Transverse colon (tissue), 4 donors: ENCODE measurements at regions of chr6 and their contacts with region 1.

Region 1: DNA sequence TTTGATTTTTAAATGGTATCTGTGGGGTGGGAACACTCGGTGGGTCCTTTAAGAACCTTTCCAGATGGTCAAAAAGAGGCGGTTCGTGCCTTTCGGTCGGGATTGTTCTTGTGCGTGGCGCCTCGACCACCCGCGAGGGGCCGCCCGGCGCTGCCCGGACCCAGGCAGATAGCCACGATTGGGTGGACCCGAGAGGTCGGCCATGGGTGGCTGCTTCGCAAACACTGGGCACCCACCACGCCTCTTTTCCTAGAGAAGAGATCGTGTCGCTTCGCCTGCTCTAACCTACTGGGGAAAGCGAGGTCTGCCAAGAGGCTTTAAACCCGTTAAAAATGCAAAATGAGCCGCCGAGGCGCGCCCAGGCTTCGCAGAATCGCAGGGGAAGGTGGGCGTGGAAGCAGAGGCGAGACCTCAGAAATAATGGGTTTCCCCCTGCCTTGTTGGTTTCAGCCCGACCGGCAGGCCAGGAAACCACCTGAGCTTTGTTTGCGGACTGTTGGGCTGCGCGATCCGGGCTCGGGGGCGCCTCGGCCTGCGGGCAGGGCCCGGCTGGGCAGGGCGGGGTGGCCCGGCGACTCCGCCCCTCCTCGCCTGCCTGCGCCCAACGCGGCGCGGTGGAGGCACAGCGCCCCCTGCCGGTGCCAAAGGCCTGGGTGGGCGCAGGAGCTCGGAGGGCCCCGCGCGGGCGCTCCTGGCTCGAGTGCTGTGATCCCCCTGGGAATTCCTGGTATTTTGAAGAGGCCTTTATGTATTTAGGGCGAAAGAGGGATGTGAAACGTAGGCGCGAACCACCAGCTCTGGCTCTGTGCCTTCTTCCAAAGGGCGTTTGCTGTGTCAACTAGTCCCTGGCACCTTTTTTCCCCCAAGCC is 1.6 kb downstream of the MARCKS start:
- DNase-seq: peak; percentile 93
- H3K4me3 ChIP-seq: peak overlapping the region; percentile 73 to 82 (median 74)
- H3K27ac ChIP-seq: peak overlapping the region; percentile 91 to 98 (median 96)
- H3K4me1 ChIP-seq: peaks cover 0 to 36% (median 13%) of the 10 kb centered on the region in 4 donors
- H3K27me3 ChIP-seq: no peaks in the 10 kb centered on the region
- CTCF ChIP-seq: peak; percentile 84 to 97 (median 93)
- EP300 ChIP-seq: peak; percentile 1
- POLR2A ChIP-seq: peak; percentile 92

Region 2: GRCh38 chr6:113306552-113307145 is 552.1 kb before region 1 on chr6:
- in situ Hi-C with region 1: loop called in 1 of 4 experiments (anchors 25 kb)
- intact Hi-C with region 1: loop called (anchors 10 kb)
- DNase-seq: peak; percentile 83
- H3K4me3 ChIP-seq: no peak overlapping the region
- H3K27ac ChIP-seq: no peak overlapping the region
- H3K4me1 ChIP-seq: no peaks in the 10 kb centered on the region
- H3K27me3 ChIP-seq: no peaks in the 10 kb centered on the region
- CTCF ChIP-seq: peak; percentile 64 to 79 (median 69)
- EP300 ChIP-seq: no peak
- POLR2A ChIP-seq: no peak

Region 3: GRCh38 chr6:113414511-113414910 is 444.2 kb before region 1 on chr6:
- in situ Hi-C with region 1: loop called in 2 of 4 experiments (anchors 25 kb)
- intact Hi-C with region 1: loop called (anchors 5 kb)
- DNase-seq: peak; percentile 23
- H3K4me3 ChIP-seq: no peak overlapping the region
- H3K27ac ChIP-seq: no peak overlapping the region
- H3K4me1 ChIP-seq: peaks cover 0 to 16% (median 10%) of the 10 kb centered on the region in 4 donors
- H3K27me3 ChIP-seq: no peaks in the 10 kb centered on the region
- CTCF ChIP-seq: peak; percentile 27 to 46 (median 33)
- EP300 ChIP-seq: no peak
- POLR2A ChIP-seq: no peak

Region 4: GRCh38 chr6:113447088-113447831 is 411.5 kb before region 1 on chr6:
- in situ Hi-C with region 1: no loop called
- intact Hi-C with region 1: loop called (anchors 10 kb)
- DNase-seq: no peak
- H3K4me3 ChIP-seq: no peak overlapping the region
- H3K27ac ChIP-seq: no peak overlapping the region
- H3K4me1 ChIP-seq: no peaks in the 10 kb centered on the region
- H3K27me3 ChIP-seq: no peaks in the 10 kb centered on the region
- CTCF ChIP-seq: no peak
- EP300 ChIP-seq: no peak
- POLR2A ChIP-seq: no peak

Region 5: GRCh38 chr6:113564371-113565161 is 294.1 kb before region 1 on chr6:
- in situ Hi-C with region 1: no loop called
- intact Hi-C with region 1: loop called (anchors 5 kb)
- DNase-seq: peak; percentile 65
- H3K4me3 ChIP-seq: peak overlapping the region in 2 of 4 donors; percentile 9 to 34
- H3K27ac ChIP-seq: peak overlapping the region; percentile 56 to 80 (median 78)
- H3K4me1 ChIP-seq: peaks cover 0 to 10% (median 0%) of the 10 kb centered on the region in 4 donors
- H3K27me3 ChIP-seq: no peaks in the 10 kb centered on the region
- CTCF ChIP-seq: peak in 2 of 5 experiments; percentile 17 to 38
- EP300 ChIP-seq: peak; percentile 86
- POLR2A ChIP-seq: no peak

Region 6: GRCh38 chr6:113632220-113632864 is 226.4 kb before region 1 on chr6:
- in situ Hi-C with region 1: loop called in 1 of 4 experiments (anchors 25 kb)
- intact Hi-C with region 1: no loop called
- DNase-seq: peak; percentile 54
- H3K4me3 ChIP-seq: peak overlapping the region in 1 of 4 donors; percentile 29
- H3K27ac ChIP-seq: peak overlapping the region; percentile 57 to 74 (median 72)
- H3K4me1 ChIP-seq: peaks cover 12 to 79% (median 41%) of the 10 kb centered on the region in 4 donors
- H3K27me3 ChIP-seq: no peaks in the 10 kb centered on the region
- CTCF ChIP-seq: no peak
- EP300 ChIP-seq: no peak
- POLR2A ChIP-seq: peak; percentile 17

Region 7: GRCh38 chr6:113774127-113774825 is 84.4 kb before region 1 on chr6:
- in situ Hi-C with region 1: no loop called
- intact Hi-C with region 1: no loop called
- DNase-seq: no peak
- H3K4me3 ChIP-seq: no peak overlapping the region
- H3K27ac ChIP-seq: no peak overlapping the region
- H3K4me1 ChIP-seq: no peaks in the 10 kb centered on the region
- H3K27me3 ChIP-seq: no peaks in the 10 kb centered on the region
- CTCF ChIP-seq: no peak
- EP300 ChIP-seq: no peak
- POLR2A ChIP-seq: no peak

Region 8: GRCh38 chr6:114194362-114195026 is 335.8 kb after region 1 on chr6:
- in situ Hi-C with region 1: no loop called
- intact Hi-C with region 1: no loop called
- DNase-seq: no peak
- H3K4me3 ChIP-seq: no peak overlapping the region
- H3K27ac ChIP-seq: no peak overlapping the region
- H3K4me1 ChIP-seq: no peaks in the 10 kb centered on the region
- H3K27me3 ChIP-seq: no peaks in the 10 kb centered on the region
- CTCF ChIP-seq: no peak
- EP300 ChIP-seq: no peak
- POLR2A ChIP-seq: no peak